Transverse colon (tissue), 4 donors: ENCODE measurements at regions of chr6 and their contacts with region 1.

Region 1: GRCh38 chr6:133447924-133448323 is 206.8 kb downstream of the EYA4 start:
- DNase-seq: no peak
- H3K4me3 ChIP-seq: no peak overlapping the region
- H3K27ac ChIP-seq: no peak overlapping the region
- H3K4me1 ChIP-seq: no peaks in the 10 kb centered on the region
- H3K27me3 ChIP-seq: no peaks in the 10 kb centered on the region
- CTCF ChIP-seq: no peak
- EP300 ChIP-seq: no peak
- POLR2A ChIP-seq: no peak

Region 2: GRCh38 chr6:132814716-132815570 is 633.0 kb before region 1 on chr6:
- in situ Hi-C with region 1: no loop called
- intact Hi-C with region 1: no loop called
- DNase-seq: peak; percentile 11
- H3K4me3 ChIP-seq: peak overlapping the region; percentile 76 to 85 (median 80)
- H3K27ac ChIP-seq: peak overlapping the region; percentile 78 to 95 (median 93)
- H3K4me1 ChIP-seq: peaks cover 14 to 36% (median 19%) of the 10 kb centered on the region in 4 donors
- H3K27me3 ChIP-seq: no peaks in the 10 kb centered on the region
- CTCF ChIP-seq: no peak
- EP300 ChIP-seq: no peak
- POLR2A ChIP-seq: no peak

Region 3: GRCh38 chr6:133424359-133424758 is 23.6 kb before region 1 on chr6:
- in situ Hi-C with region 1: no loop called
- intact Hi-C with region 1: loop called (anchors 2 kb)
- DNase-seq: no peak
- H3K4me3 ChIP-seq: no peak overlapping the region
- H3K27ac ChIP-seq: no peak overlapping the region
- H3K4me1 ChIP-seq: no peaks in the 10 kb centered on the region
- H3K27me3 ChIP-seq: no peaks in the 10 kb centered on the region
- CTCF ChIP-seq: no peak
- EP300 ChIP-seq: no peak
- POLR2A ChIP-seq: no peak

Region 4: GRCh38 chr6:133487174-133487573 is 39.2 kb after region 1 on chr6:
- in situ Hi-C with region 1: no loop called
- intact Hi-C with region 1: no loop called
- DNase-seq: no peak
- H3K4me3 ChIP-seq: no peak overlapping the region
- H3K27ac ChIP-seq: no peak overlapping the region
- H3K4me1 ChIP-seq: no peaks in the 10 kb centered on the region
- H3K27me3 ChIP-seq: no peaks in the 10 kb centered on the region
- CTCF ChIP-seq: no peak
- EP300 ChIP-seq: no peak
- POLR2A ChIP-seq: no peak